ENCODE measurements at regions of chr4 and their contacts with region 1.

Region 1: DNA sequence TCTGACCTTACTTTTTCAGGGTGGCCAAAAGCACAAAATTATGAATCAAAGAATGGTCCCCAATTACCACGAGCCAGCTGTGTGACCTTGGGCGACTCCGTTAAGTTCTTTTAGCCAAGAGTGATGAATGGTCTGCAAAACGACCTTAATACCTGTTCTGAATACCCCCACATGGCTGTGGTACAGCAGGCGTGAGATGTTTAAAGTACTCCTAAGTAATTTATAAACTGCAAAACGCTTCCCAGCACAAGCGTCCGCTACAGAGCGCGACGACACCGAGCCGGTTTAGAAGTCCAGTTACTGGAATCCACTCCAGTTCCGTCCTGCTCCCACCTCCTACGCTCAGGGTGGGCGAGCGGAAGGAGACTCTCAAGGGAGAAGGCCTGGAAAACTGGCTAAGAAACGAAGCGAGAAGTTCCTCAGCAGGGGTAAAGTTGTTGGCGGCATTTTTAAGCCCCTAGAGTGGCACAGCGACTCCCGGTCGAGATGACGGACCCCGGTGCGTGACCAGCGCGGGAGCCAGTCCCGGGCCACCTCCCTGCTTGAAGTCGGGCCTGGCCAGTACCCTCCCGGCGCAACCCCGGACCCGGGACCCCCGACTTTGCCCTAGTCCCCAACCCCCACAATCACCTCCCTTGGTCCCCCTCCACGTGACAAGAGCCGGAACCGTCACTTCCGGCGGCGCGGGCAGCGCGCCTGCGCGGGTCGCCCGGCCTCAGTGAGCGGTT is 683 bp upstream of the BMP2K start:
- DNase-seq: peak; percentile 97
- H3K4me3 Mint-ChIP-seq: peak overlapping the region; percentile 93
- H3K27ac Mint-ChIP-seq: peak overlapping the region; percentile 98
- H3K4me1 Mint-ChIP-seq: peaks cover 34% of the 10 kb centered on the region
- H3K27me3 Mint-ChIP-seq: no peaks in the 10 kb centered on the region

Region 2: GRCh38 chr4:78551479-78552351 is 223.8 kb before region 1 on chr4 and contains the start of gene ANXA3:
- intact Hi-C with region 1: loop called (anchors 5 kb)
- DNase-seq: peak; percentile 74
- H3K4me3 Mint-ChIP-seq: peak within 1 kb of the TSS; percentile 88
- H3K27ac Mint-ChIP-seq: peak within 1 kb of the TSS; percentile 49
- H3K4me1 Mint-ChIP-seq: peaks cover 11% of the 10 kb centered on the region
- H3K27me3 Mint-ChIP-seq: peaks cover 20% of the 10 kb centered on the region
- total RNA-seq, gene ANXA3: 1.9 TPM in 2 replicates

Region 3: GRCh38 chr4:78656968-78657445 is 118.5 kb before region 1 on chr4:
- intact Hi-C with region 1: loop called (anchors 1 kb)
- DNase-seq: peak; percentile 80
- H3K4me3 Mint-ChIP-seq: peak overlapping the region; percentile 61
- H3K27ac Mint-ChIP-seq: peak overlapping the region; percentile 65
- H3K4me1 Mint-ChIP-seq: peaks cover 38% of the 10 kb centered on the region
- H3K27me3 Mint-ChIP-seq: no peaks in the 10 kb centered on the region

Region 4: DNA sequence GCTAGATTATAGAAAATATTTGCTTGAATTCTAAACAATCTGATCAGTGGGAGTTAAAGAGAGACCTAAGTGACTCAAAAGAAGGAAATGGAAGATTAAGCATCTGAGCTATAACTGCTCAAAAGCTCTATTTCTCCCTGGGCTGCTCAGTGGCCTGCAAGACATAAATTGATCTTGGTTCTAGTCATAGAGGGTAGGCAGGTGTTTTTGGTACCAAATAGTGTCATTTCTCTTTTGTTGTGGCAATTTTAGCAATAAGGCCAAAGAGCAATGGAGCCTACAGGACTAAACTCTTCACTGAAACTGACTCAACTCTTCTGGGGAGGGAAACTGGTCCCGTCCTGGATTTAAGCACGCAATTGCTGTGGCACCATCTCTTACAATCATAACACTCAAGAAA is 33.2 kb before region 1 on chr4:
- intact Hi-C with region 1: no loop called
- DNase-seq: no peak
- H3K4me3 Mint-ChIP-seq: no peak overlapping the region
- H3K27ac Mint-ChIP-seq: no peak overlapping the region
- H3K4me1 Mint-ChIP-seq: no peaks in the 10 kb centered on the region
- H3K27me3 Mint-ChIP-seq: peaks cover 3% of the 10 kb centered on the region

Region 5: DNA sequence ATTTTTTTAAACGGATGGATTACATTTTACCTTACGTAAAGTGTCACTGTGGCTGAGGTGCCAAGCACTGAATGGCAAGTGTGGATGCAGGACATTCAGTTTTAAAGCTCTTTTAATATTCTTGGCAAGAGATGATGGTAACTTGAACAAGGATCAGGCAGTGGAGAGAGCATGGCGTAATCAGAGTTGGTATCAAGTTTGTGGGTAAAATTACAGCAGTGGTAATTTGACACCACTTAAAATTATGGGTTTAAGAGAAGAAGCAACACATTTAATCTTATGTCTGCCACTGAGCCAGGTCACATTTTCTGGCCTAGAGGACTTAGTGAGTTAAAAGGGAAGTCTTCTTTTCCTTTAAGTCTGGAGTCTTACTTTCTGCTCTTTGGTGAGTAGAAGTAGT is 449.9 kb after region 1 on chr4:
- intact Hi-C with region 1: no loop called
- DNase-seq: no peak
- H3K4me3 Mint-ChIP-seq: no peak overlapping the region
- H3K27ac Mint-ChIP-seq: no peak overlapping the region
- H3K4me1 Mint-ChIP-seq: no peaks in the 10 kb centered on the region
- H3K27me3 Mint-ChIP-seq: no peaks in the 10 kb centered on the region